ENCODE measurements at regions of chr13 and their contacts with region 1.

Region 1: GRCh38 chr13:71430681-71431080 is 436.3 kb downstream of the DACH1 start:
- DNase-seq: no peak
- H3K4me3 ChIP-seq: no peak overlapping the region
- H3K27ac ChIP-seq: no peak overlapping the region
- H3K4me1 ChIP-seq: no peaks in the 10 kb centered on the region
- H3K27me3 ChIP-seq: no peaks in the 10 kb centered on the region
- CTCF ChIP-seq: no peak

Region 2: GRCh38 chr13:71448231-71448630 is 17.6 kb after region 1 on chr13:
- intact Hi-C with region 1: loop called (anchors 1 kb)
- DNase-seq: no peak
- H3K4me3 ChIP-seq: no peak overlapping the region
- H3K27ac ChIP-seq: no peak overlapping the region
- H3K4me1 ChIP-seq: no peaks in the 10 kb centered on the region
- H3K27me3 ChIP-seq: no peaks in the 10 kb centered on the region
- CTCF ChIP-seq: no peak

Region 3: GRCh38 chr13:72726726-72727416 is 1296.2 kb after region 1 on chr13:
- intact Hi-C with region 1: no loop called
- DNase-seq: peak; percentile 22 to 70
- H3K4me3 ChIP-seq: peak overlapping the region; percentile 86 to 91
- H3K27ac ChIP-seq: peak overlapping the region; percentile 63 to 73
- H3K4me1 ChIP-seq: peaks cover 0 to 22% (median 15%) of the 10 kb centered on the region in 4 donors
- H3K27me3 ChIP-seq: no peaks in the 10 kb centered on the region
- CTCF ChIP-seq: no peak